PC-3 (cell line): ENCODE measurements at regions of chr5 and their contacts with region 1.

Region 1: DNA sequence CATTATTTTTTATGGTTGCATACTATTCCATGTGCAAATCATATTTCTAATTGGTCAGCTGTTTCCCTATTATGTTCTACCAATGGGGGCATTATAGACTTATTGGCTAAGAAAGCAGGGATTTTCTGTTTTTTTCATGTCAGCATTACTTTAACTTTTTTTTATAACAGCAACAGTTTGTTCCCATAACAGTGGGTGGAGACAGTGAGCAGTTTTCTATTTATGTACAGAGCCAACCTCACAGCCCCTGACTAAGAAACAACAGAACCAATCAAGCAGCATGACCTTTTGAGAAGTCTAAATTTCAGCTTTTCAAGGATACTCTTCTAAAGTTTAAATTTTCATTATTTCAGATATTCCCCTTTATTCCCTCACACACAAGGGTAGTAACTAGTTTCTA is 2026.2 kb downstream of the EFNA5 start:
- DNase-seq: peak; percentile 38
- ATAC-seq: no peak
- H3K4me3 ChIP-seq: no peak overlapping the region
- H3K27ac ChIP-seq: no peak overlapping the region
- H3K4me1 ChIP-seq: no peaks in the 10 kb centered on the region
- H3K27me3 ChIP-seq: no peaks in the 10 kb centered on the region
- CTCF ChIP-seq: peak; percentile 53; the same call in 1 of the 2 replicates

Region 2: GRCh38 chr5:104312485-104312884 is 1332.0 kb before region 1 on chr5:
- CTCF ChIA-PET with region 1: no interaction called
- POLR2A ChIA-PET with region 1: interaction called, 11 read pairs
- intact Hi-C with region 1: no loop called
- DNase-seq: peak; percentile 53
- ATAC-seq: peak; percentile 95
- H3K4me3 ChIP-seq: no peak overlapping the region
- H3K27ac ChIP-seq: no peak overlapping the region
- H3K4me1 ChIP-seq: peaks cover 10% of the 10 kb centered on the region; the same call in 1 of the 2 replicates
- H3K27me3 ChIP-seq: no peaks in the 10 kb centered on the region
- CTCF ChIP-seq: no peak

Region 3: DNA sequence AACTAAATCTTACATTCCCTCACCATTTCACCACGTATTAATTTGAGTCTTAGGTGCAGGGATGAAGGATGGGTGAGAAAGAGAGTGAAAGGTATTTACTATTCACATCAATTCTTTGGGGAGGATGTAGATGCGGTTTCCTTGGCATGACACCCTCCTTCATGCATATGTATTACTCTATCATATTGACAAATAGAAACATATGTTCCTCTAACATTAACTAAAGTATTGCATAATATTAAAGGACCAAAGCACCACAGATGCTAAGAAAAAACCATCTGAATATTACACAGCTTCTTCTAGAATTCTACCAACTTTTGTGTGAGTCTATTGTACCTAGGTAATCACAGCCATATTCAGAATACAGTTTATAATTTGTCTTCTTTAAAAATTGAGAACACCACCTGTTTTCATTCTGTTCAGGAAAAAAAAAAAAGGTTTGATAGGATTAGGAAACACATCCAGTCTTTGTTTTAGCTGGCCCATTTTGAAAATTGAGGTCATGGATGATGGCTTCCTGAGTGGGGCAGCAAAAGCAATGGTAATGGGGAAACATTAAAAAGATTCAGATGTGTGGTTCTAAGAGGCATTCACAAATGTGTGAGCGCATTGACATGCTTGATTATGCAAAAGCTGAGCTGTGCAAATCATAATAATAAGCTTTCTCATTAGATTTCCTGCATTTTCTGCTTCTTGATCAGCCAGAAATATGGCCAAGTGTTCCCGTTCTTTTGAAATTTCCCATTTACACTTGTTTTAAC is 1070.4 kb before region 1 on chr5:
- CTCF ChIA-PET with region 1: no interaction called
- POLR2A ChIA-PET with region 1: no interaction called
- intact Hi-C with region 1: no loop called
- DNase-seq: no peak
- ATAC-seq: no peak
- H3K4me3 ChIP-seq: no peak overlapping the region
- H3K27ac ChIP-seq: no peak overlapping the region
- H3K4me1 ChIP-seq: no peaks in the 10 kb centered on the region
- H3K27me3 ChIP-seq: no peaks in the 10 kb centered on the region
- CTCF ChIP-seq: peak; percentile 31

Region 4: DNA sequence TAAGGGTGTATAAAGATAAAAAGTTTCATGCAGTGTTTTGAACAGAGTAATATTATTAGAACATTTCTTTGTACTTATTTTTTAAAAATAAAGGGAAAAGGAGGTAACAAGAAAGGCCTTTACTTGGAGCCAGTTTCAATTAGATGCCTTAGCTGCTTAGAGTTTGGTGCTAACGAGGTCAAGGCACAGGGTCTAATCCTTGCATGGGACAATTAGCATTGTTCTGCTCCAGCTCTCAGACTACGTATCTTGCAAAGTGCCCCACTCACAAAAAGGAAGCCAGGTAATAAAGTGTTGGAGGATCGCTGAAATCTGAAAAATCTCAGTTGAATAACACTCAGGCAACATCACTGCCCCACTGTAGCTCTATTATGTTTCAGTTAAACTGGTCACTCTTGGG is 14.9 kb after region 1 on chr5:
- CTCF ChIA-PET with region 1: no interaction called
- POLR2A ChIA-PET with region 1: no interaction called
- intact Hi-C with region 1: no loop called
- DNase-seq: no peak
- ATAC-seq: no peak
- H3K4me3 ChIP-seq: no peak overlapping the region
- H3K27ac ChIP-seq: no peak overlapping the region
- H3K4me1 ChIP-seq: no peaks in the 10 kb centered on the region
- H3K27me3 ChIP-seq: no peaks in the 10 kb centered on the region
- CTCF ChIP-seq: no peak